Cardiac septum (tissue), 1 donor: ENCODE measurements at regions of chr4 and their contacts with region 1.

Region 1: DNA sequence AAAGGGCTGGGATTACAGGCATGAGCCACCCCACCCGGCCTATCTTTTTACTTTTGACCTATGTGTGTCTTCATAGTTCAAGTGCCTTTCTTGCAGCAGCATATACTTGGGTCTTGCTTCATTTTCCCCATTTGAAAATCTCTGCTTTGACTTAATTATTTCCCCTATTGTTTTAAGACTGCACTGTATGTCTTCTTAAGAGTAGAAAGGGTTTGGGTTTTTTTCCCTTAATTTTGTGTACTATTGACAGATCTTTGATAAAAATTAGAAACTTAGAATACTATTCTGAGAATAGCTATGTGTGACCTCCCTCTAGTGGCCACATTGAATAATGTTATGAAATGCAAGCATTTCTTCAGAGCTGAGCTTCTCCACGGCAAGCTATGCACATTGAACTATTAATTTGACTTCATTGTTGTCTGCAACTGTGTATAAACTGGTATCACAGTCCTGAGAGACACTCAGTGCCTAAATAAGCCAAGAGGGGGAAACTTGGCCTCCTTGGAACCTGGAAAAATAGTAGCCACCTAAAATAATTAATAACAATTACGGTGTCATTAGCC is 8.7 kb upstream of the SLC25A4 start:
- DNase-seq: no peak

Region 2: GRCh38 chr4:185039508-185040273 is 94.7 kb before region 1 on chr4:
- intact Hi-C with region 1: loop called (anchors 1 kb)
- DNase-seq: no peak

Region 3: GRCh38 chr4:185096032-185096653 is 38.2 kb before region 1 on chr4:
- intact Hi-C with region 1: loop called (anchors 5 kb)
- DNase-seq: no peak

Region 4: GRCh38 chr4:185183619-185184281 is 49.4 kb after region 1 on chr4:
- intact Hi-C with region 1: no loop called
- DNase-seq: peak; percentile 78